HepG2 (cell line): ENCODE measurements at regions of chr3 and their contacts with region 1.

Region 1: DNA sequence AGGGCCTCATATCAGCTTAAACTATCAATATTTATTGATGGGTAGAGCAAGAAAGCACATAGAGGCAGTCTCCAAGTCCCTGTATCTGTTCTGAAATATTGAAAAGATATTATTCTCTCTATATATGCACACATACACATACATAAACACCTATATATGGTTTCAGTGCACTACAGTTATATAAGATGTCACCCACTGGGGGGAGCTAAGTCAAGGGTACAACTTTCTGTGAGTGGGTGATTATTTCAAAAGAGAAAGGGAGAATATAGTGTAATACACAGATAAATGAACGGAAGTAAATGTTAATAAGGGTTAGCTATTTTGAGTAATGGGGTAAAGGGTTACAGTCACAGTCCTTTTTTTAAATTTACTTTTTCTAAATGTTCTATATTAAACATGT is 8.8 kb downstream of the SNTN start:
- DNase-seq: no peak
- ATAC-seq: no peak
- H3K4me3 ChIP-seq: no peak overlapping the region
- H3K27ac ChIP-seq: no peak overlapping the region
- H3K4me1 ChIP-seq: no peaks in the 10 kb centered on the region
- H3K27me3 ChIP-seq: no peaks in the 10 kb centered on the region
- CTCF ChIP-seq: no peak
- EP300 ChIP-seq: no peak
- POLR2A ChIP-seq: no peak
- RAD21 ChIP-seq: no peak

Region 2: DNA sequence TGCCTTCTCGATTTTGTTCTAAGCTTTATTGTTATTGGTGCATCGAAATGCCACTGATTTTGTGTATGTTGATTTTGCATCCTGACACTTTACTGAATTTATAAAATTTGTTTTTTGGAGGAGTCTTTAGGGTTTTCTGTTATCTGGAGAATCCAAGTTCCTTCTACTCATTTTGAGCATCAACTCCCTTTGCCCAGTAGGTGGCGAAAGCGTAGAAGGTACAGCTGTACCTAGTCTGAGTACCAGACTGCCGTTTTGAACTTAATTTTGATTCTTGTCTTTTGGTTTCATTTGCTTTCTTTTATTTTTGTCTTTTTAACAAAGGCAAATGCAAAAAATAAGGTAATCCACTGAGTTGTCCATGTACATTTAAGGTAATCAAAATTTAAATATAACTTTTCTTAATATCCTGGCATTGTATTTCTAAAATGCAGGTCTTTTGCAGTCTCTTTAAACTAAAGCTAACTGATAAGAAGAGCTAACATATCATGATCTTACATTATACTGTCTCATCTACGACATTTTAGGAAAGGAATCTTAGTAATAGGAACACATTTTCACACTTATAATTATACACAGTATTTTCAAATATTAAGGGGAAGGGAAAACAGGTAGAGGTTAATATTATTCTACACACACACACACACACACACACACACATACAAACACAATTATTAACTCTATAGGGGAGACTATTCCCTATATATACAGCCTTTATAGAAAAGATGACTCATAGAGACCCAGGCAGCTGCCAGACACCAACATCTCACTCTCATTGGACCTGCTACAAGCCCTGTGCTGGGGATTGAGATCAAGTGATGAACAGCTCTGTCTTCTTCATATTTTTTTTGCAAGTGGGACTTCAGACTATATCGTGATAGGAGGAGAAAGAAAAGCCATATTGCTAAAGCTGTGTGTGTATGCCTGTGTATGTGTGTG is 311.4 kb before region 1 on chr3:
- CTCF ChIA-PET with region 1: no interaction called
- POLR2A ChIA-PET with region 1: no interaction called
- in situ Hi-C with region 1: no loop called
- intact Hi-C with region 1: loop called (anchors 10 kb)
- DNase-seq: peak; percentile 56
- ATAC-seq: peak; percentile 79
- H3K4me3 ChIP-seq: no peak overlapping the region
- H3K27ac ChIP-seq: no peak overlapping the region
- H3K4me1 ChIP-seq: no peaks in the 10 kb centered on the region
- H3K27me3 ChIP-seq: peaks cover 1 to 9% of the 10 kb centered on the region in 2 experiments; a peak in 2 of 5 replicates
- CTCF ChIP-seq: peak; percentile 67
- EP300 ChIP-seq: no peak
- POLR2A ChIP-seq: no peak
- RAD21 ChIP-seq: no peak

Region 3: GRCh38 chr3:63631670-63632069 is 29.6 kb before region 1 on chr3:
- CTCF ChIA-PET with region 1: no interaction called
- POLR2A ChIA-PET with region 1: no interaction called
- in situ Hi-C with region 1: no loop called
- intact Hi-C with region 1: no loop called
- DNase-seq: no peak
- ATAC-seq: no peak
- H3K4me3 ChIP-seq: no peak overlapping the region
- H3K27ac ChIP-seq: no peak overlapping the region
- H3K4me1 ChIP-seq: no peaks in the 10 kb centered on the region
- H3K27me3 ChIP-seq: no peaks in the 10 kb centered on the region; a peak in 1 of 5 replicates
- CTCF ChIP-seq: no peak
- EP300 ChIP-seq: no peak
- POLR2A ChIP-seq: no peak
- RAD21 ChIP-seq: no peak